ENCODE measurements at regions of chr10 and their contacts with region 1.

Region 1: DNA sequence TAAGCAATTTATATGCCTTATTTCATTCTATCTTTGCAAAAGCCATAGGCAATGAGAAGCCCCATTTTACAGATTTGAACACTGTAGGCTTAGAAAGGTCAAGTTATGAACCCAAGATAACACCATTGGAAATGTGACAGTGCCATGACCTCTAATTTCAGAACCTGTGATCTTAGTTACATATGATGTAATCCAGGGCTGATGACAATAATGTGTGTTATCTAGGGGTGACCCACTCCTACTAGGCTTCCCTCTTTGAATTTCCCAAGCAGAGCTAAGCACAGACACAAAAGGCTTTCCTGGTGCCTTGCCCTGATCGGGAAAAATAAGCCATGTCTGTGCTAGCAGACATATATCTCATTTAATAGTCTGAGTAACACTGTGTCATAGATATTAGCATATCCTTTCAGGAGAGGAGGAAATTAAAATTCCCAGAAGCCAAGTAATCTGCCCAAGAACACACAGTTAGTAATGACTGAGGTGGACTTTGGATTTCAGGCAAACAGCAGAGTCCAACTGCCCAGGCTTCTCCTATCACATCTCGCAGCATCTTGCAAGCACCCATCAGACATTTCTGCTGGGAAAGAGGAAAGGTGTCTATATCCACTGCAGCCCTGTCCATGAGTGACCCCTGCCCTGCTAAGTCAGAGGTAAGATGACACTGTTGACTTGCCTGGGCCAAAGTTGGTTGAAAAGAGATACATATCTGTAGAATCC is 2.8 kb upstream of the TECTB start:
- DNase-seq: no peak
- H3K4me3 Mint-ChIP-seq: no peak overlapping the region
- H3K27ac Mint-ChIP-seq: no peak overlapping the region
- H3K4me1 Mint-ChIP-seq: no peaks in the 10 kb centered on the region
- H3K27me3 Mint-ChIP-seq: peaks cover 16% of the 10 kb centered on the region

Region 2: DNA sequence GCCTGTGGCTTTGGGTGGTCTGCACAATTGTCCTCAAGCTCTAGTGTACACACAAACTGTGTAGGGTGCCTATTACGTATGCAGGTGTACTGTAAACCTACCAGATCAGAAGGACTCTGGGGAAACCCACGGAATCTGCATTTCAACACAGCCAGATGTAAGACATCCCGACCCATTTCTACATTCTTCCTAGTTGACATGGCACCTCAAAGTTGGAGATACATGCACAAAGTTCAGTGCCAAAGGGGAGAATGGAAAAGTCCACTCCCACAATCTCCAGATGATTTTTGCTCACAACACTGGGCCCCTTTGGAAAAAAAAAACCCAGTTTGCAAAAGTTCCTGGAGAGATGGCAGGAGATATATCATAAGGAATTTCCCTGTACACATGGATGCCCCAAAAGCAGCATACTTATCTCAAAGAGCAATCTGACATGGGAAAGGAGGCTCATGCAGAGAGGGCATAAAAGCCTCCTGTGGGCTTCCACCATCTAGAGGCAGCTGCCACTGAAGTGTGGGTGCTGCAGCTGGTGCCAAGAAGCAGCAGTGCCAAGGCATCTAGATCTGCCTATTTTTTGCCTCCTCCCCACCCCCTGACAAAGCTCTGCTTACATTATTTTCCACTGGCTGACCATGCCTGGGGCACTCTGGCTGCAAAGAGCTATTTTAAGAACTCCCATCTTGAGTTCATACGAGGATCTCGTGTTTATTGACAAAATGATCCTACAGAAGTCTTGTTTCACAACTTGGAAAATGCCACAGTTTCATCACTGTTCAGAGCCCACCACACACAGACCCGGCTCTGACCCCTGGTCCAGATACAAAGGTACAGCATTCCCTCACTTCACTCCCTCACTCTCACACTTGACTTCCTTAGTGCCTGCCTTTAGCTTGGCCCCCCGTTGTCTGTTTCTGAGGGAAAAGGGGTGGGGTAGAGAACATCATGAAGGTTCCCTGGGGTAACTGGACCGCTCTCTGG is 15.8 kb after region 1 on chr10:
- CTCF ChIA-PET with region 1: no interaction called
- POLR2A ChIA-PET with region 1: no interaction called
- DNase-seq: no peak
- H3K4me3 Mint-ChIP-seq: no peak overlapping the region
- H3K27ac Mint-ChIP-seq: no peak overlapping the region
- H3K4me1 Mint-ChIP-seq: no peaks in the 10 kb centered on the region
- H3K27me3 Mint-ChIP-seq: peaks cover 14% of the 10 kb centered on the region

Region 3: GRCh38 chr10:114208351-114208750 is 1928.0 kb after region 1 on chr10:
- CTCF ChIA-PET with region 1: interaction called, 10 read pairs
- POLR2A ChIA-PET with region 1: no interaction called
- DNase-seq: no peak
- H3K4me3 Mint-ChIP-seq: no peak overlapping the region
- H3K27ac Mint-ChIP-seq: no peak overlapping the region
- H3K4me1 Mint-ChIP-seq: no peaks in the 10 kb centered on the region
- H3K27me3 Mint-ChIP-seq: peaks cover 25% of the 10 kb centered on the region